Spleen (tissue), 13 donors: ENCODE measurements at regions of chr9 and their contacts with region 1.

Region 1: DNA sequence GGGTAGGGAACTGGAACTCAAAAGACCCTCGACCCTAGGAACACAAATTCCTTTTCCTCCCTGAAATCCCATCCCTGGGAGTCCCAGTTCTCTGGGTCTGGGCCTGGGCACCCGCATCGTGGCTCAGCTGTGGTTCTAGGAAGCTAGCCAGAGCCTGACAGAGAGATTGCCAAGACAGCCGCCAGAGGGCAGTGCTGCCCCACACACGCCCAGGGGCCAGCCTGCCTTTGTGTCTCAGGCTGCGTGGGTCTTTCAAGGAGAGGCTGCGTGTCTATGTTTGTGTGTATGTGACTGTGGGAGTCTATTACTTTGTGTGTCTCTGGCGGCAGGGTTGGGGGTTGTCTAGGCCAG is 32.0 kb upstream of the TTLL11 start:
- DNase-seq: peak; percentile 93
- H3K4me3 ChIP-seq: no peak overlapping the region
- H3K27ac ChIP-seq: no peak overlapping the region
- H3K4me1 ChIP-seq: peaks cover 13 to 48% (median 43%) of the 10 kb centered on the region in 6 donors
- H3K27me3 ChIP-seq: peaks cover 0 to 58% (median 21%) of the 10 kb centered on the region in 7 donors
- CTCF ChIP-seq: peak; percentile 73 to 97 (median 95)
- POLR2A ChIP-seq: no peak

Region 2: DNA sequence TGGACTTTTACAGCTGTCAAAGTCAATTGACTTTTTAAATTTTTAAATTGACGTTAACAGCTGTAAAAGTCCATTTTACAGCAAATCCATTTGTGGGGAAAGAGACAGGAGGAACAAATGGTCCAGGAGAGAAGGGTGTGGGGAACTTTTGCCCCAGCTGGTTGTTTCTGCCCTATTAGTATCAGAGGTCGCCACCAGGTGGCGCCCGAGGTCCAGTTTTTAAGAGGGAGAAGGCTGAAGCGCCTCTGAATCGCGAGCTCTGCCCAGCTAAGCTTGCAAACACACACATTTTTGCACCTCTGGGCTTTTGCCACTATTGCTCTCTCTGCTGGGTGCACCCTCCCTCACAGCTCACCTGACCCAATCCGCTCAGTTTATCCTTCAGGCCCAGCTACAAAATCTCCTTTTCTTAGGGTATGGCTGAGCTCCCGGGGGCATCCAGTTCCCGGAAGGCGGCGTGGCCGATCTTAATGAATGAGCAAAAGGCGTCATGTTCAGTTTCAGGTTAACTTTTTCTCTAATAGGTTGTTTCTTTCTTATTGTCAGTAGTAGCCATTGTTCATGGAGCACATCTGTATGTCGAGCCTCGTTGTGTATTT is 25.8 kb before region 1 on chr9:
- intact Hi-C with region 1: loop called (anchors 2 kb)
- DNase-seq: peak; percentile 94
- H3K4me3 ChIP-seq: peak overlapping the region in 1 of 8 donors; percentile 19
- H3K27ac ChIP-seq: no peak overlapping the region
- H3K4me1 ChIP-seq: peaks cover 0 to 35% (median 13%) of the 10 kb centered on the region in 6 donors
- H3K27me3 ChIP-seq: peaks cover 0 to 11% (median 0%) of the 10 kb centered on the region in 7 donors
- CTCF ChIP-seq: peak; percentile 50 to 91 (median 79)
- POLR2A ChIP-seq: no peak

Region 3: GRCh38 chr9:122350638-122351355 is 225.7 kb after region 1 on chr9:
- intact Hi-C with region 1: loop called (anchors 2 kb)
- DNase-seq: peak; percentile 95
- H3K4me3 ChIP-seq: no peak overlapping the region
- H3K27ac ChIP-seq: no peak overlapping the region
- H3K4me1 ChIP-seq: peaks cover 3 to 41% (median 23%) of the 10 kb centered on the region in 6 donors
- H3K27me3 ChIP-seq: peaks cover 0 to 34% (median 7%) of the 10 kb centered on the region in 7 donors
- CTCF ChIP-seq: peak; percentile 92 to 99 (median 97)
- POLR2A ChIP-seq: no peak

Region 4: GRCh38 chr9:122453677-122454135 is 328.6 kb after region 1 on chr9:
- intact Hi-C with region 1: loop called (anchors 10 kb)
- DNase-seq: no peak
- H3K4me3 ChIP-seq: no peak overlapping the region
- H3K27ac ChIP-seq: no peak overlapping the region
- H3K4me1 ChIP-seq: no peaks in the 10 kb centered on the region
- H3K27me3 ChIP-seq: no peaks in the 10 kb centered on the region
- CTCF ChIP-seq: no peak
- POLR2A ChIP-seq: no peak

Region 5: DNA sequence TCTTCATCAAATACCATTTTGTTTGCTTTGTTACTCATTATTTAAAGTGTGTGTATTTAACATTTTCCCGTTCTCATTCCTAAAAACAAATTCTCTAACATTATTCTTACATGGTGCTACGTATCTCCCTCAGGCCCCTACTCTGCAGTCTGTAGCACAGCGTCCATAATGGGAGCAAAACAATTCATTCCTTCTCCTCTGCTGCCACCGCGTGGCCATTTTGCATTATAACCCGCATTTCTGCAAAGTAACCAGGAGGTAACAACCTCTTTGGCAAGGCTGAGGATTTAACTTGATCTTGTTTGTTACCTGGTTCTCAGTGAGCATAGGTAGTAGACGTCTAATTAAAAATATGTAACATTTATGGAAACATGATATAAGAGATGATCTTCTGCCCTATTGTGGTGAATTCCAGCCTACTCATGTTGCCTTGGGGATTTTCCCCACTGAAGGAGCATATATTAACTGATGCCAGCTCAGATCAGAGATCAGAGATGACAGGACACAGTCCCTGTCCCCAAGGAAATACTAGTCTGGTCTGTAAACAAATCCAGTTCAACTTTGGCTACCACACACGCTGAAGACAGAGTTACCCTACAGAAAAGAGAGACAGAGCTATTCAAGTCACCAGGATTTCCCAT is 685.3 kb after region 1 on chr9:
- intact Hi-C with region 1: loop called (anchors 10 kb)
- DNase-seq: peak; percentile 88
- H3K4me3 ChIP-seq: no peak overlapping the region
- H3K27ac ChIP-seq: no peak overlapping the region
- H3K4me1 ChIP-seq: peaks cover 0 to 21% (median 5%) of the 10 kb centered on the region in 6 donors
- H3K27me3 ChIP-seq: no peaks in the 10 kb centered on the region
- CTCF ChIP-seq: peak; percentile 80 to 91 (median 85)
- POLR2A ChIP-seq: no peak